CD8-positive, alpha-beta memory T cell (primary cell): ENCODE measurements at regions of chr1 and their contacts with region 1.

Region 1: DNA sequence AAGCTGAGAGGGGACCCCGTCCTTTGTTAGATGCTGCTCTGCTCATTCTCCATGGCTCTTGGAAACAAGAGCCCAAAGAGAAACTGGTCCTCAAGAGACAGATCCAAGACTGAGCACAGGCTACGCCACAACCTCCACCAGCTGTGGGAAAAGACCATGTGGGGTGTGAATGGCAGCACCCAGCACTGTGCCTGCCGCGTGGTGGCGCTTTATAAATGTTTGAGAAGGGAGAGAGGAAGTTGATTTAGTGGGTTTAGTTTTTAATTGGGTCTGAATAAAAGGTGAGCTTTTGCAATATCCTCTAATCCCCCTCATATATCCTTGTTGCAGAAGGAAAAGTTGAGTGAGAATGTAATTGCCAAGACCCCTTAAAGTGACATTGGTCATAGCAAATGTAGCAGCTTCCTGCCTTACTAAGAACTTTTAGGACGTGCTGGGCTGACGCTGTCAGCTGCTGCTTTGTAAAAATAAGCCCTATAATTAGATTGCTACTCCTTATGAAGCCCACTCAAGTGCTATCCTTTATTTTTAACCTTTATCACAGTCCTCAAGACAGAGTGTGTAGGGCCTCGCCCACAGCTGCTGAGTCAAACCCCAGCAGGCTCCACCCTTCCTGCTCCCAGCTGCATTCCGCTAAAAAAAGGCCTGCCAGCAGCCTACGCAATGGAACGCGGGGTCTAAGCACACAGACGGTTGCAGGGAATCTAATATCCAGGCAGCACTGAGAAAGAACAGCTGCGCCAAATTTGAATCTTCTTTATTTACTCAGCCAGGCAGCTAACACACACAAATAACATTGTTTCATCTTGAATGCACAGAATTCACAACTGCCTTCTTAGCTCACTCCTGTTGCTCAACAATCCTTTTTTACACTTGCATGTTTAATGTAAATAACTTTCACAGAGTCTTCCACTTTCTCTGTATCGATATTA is 47.4 kb upstream of the PRDX6 start:
- DNase-seq: peak; percentile 38 to 72 (median 50)
- H3K4me3 ChIP-seq: no peak overlapping the region
- H3K4me3 Mint-ChIP-seq: peak overlapping the region in 6 of 7 donors; percentile 37 to 65 (median 48)
- H3K27ac ChIP-seq: peak overlapping the region; percentile 34
- H3K27ac Mint-ChIP-seq: peak overlapping the region; percentile 49 to 89 (median 63)
- H3K4me1 ChIP-seq: peaks cover 17% of the 10 kb centered on the region
- H3K4me1 Mint-ChIP-seq: peaks cover 16 to 35% (median 32%) of the 10 kb centered on the region in 3 donors
- H3K27me3 ChIP-seq: no peaks in the 10 kb centered on the region
- H3K27me3 Mint-ChIP-seq: no peaks in the 10 kb centered on the region

Region 2: DNA sequence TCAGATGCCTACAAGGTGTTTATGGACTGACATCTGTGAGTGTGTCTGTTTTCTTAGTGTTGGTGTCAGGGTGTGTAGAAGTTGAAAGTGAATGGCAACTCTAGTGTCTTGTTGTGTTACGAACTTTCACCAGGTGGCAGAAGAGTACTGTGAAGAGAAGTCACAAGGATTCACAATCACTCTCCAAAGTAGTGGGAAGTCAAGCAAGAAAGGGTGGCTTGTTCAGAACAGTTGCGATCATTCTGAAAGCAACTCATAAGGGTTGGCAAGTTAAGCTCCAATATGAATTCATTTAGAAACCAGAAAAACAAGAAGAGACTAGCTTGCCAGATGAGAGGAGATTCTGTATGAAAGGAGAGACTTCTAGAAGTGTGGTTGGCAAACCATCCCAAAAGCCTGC is 684.7 kb before region 1 on chr1:
- CTCF ChIA-PET with region 1: interaction called, 25 read pairs
- POLR2A ChIA-PET with region 1: no interaction called
- DNase-seq: peak in 2 of 5 donors; percentile 44 to 52
- H3K4me3 ChIP-seq: no peak overlapping the region
- H3K4me3 Mint-ChIP-seq: peak overlapping the region in 3 of 7 donors; percentile 19 to 49 (median 33)
- H3K27ac ChIP-seq: no peak overlapping the region
- H3K27ac Mint-ChIP-seq: peak overlapping the region in 3 of 8 donors; percentile 3 to 65 (median 6)
- H3K4me1 ChIP-seq: peaks cover 24% of the 10 kb centered on the region
- H3K4me1 Mint-ChIP-seq: peaks cover 31 to 39% (median 36%) of the 10 kb centered on the region in 3 donors
- H3K27me3 ChIP-seq: no peaks in the 10 kb centered on the region
- H3K27me3 Mint-ChIP-seq: peaks cover 4 to 6% of the 10 kb centered on the region in 2 donors

Region 3: DNA sequence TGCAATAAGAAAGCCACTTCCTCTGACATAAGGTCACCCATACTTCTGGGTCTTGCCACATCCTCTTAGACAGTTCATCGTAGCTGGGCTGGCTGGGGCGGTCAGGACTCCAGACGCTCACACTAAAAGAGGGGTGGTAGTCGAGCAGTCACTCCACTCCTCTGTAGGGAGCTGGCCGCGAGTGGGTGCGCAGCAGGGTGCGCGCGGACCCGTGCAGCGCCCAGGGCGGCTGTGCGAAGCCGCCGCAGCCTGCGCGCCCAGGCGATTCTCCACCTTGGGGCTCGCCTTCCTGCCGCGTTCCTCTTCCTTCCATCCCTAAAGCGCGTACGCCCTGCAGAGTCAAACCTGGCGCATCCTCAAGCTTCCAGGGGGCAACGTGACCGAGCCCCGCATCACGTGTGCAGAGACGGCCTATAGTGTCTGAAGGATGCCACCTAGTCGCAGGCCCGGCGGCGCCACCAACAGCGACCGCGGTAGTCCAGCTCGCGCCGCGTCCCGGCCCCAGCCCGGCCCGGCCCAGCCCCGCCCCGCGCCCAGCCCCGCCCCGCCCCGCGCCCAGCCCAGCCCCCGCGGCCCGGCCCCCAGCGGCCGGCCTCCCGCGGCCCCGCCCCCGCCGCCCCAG is 47.0 kb after region 1 on chr1:
- CTCF ChIA-PET with region 1: interaction called, 30 read pairs
- POLR2A ChIA-PET with region 1: interaction called, 4 read pairs
- DNase-seq: peak; percentile 78 to 89 (median 80)
- H3K4me3 ChIP-seq: peak overlapping the region; percentile 93
- H3K4me3 Mint-ChIP-seq: peak overlapping the region; percentile 88 to 97 (median 93)
- H3K27ac ChIP-seq: peak overlapping the region; percentile 93
- H3K27ac Mint-ChIP-seq: peak overlapping the region; percentile 92 to 97 (median 94)
- H3K4me1 ChIP-seq: peaks cover 40% of the 10 kb centered on the region
- H3K4me1 Mint-ChIP-seq: peaks cover 58 to 79% (median 76%) of the 10 kb centered on the region in 3 donors
- H3K27me3 ChIP-seq: no peaks in the 10 kb centered on the region
- H3K27me3 Mint-ChIP-seq: no peaks in the 10 kb centered on the region

Region 4: GRCh38 chr1:173570370-173571007 is 140.8 kb after region 1 on chr1:
- CTCF ChIA-PET with region 1: no interaction called
- POLR2A ChIA-PET with region 1: no interaction called
- DNase-seq: no peak
- H3K4me3 ChIP-seq: no peak overlapping the region
- H3K4me3 Mint-ChIP-seq: peak overlapping the region in 1 of 7 donors; percentile 32
- H3K27ac ChIP-seq: no peak overlapping the region
- H3K27ac Mint-ChIP-seq: no peak overlapping the region
- H3K4me1 ChIP-seq: no peaks in the 10 kb centered on the region
- H3K4me1 Mint-ChIP-seq: peaks cover 0 to 10% (median 3%) of the 10 kb centered on the region in 3 donors
- H3K27me3 ChIP-seq: no peaks in the 10 kb centered on the region
- H3K27me3 Mint-ChIP-seq: peaks cover 5 to 9% of the 10 kb centered on the region in 2 donors

Region 5: DNA sequence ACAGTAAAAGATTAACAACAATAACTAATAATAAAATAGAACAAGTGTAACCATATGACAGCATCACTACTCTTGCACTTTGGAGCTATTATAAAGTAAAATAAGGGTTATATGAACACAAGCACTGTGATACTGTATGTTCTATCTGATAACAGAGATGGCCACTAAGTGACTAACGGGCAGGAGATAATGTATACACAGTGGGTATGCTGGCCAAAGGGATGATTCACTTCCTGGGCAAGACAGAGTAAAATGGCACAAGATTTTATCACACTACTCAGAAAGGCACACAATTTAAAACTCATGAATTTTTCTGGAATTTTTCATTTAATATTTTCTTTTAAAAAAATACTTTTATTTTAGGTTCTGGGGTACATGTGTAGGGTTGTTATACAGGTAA is 160.8 kb after region 1 on chr1:
- CTCF ChIA-PET with region 1: no interaction called
- POLR2A ChIA-PET with region 1: interaction called, 10 read pairs
- DNase-seq: no peak
- H3K4me3 ChIP-seq: no peak overlapping the region
- H3K4me3 Mint-ChIP-seq: no peak overlapping the region
- H3K27ac ChIP-seq: no peak overlapping the region
- H3K27ac Mint-ChIP-seq: no peak overlapping the region
- H3K4me1 ChIP-seq: no peaks in the 10 kb centered on the region
- H3K4me1 Mint-ChIP-seq: peaks cover 0 to 11% (median 9%) of the 10 kb centered on the region in 3 donors
- H3K27me3 ChIP-seq: no peaks in the 10 kb centered on the region
- H3K27me3 Mint-ChIP-seq: peaks cover 2 to 10% of the 10 kb centered on the region in 2 donors

Region 6: DNA sequence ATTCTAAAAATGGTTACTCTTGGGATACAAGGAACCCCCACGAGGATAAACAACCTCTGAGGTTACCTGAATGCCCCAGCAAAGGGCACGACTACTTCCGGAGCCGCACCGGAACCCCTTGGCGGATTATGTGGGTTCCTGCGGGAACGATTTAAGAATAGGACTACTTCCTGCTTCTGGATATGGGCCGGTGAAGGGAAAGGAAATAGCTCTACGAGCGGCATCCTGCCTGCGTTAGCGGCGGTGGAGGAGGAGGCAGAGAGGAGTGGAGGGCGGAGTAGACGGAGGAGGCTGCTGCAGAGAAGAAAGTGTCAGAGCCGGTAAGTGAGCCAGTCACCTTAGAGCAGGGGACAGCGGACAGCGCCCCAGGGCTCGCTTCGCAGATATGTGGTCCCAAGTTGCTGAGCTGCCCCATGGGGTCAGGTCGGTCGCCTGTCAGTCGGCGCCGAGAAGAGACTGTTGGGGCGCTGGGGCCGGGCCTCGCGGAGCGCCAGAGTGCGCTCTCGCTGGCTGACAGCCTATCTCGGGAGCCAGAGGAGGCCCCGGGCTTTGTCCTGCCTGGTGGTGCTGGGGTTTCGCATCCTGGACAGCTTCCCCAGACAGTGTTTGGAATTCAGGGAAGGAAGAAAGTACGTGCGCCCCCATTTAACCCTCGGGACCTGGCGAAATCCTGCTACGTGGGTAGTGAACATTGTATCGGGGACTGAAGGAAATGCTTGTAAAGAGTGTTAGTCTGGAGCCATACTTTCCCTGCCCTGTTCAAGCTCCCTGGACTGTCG is 285.2 kb after region 1 on chr1 and contains the start of gene KLHL20:
- CTCF ChIA-PET with region 1: interaction called, 14 read pairs
- POLR2A ChIA-PET with region 1: interaction called, 3 read pairs
- DNase-seq: peak; percentile 74 to 89 (median 89)
- H3K4me3 ChIP-seq: peak within 1 kb of the TSS; percentile 77
- H3K4me3 Mint-ChIP-seq: peak within 1 kb of the TSS; percentile 88 to 99 (median 93)
- H3K27ac ChIP-seq: peak within 1 kb of the TSS; percentile 87
- H3K27ac Mint-ChIP-seq: peak within 1 kb of the TSS; percentile 71 to 99 (median 95)
- H3K4me1 ChIP-seq: peaks cover 26% of the 10 kb centered on the region
- H3K4me1 Mint-ChIP-seq: peaks cover 32 to 44% (median 34%) of the 10 kb centered on the region in 3 donors
- H3K27me3 ChIP-seq: peaks cover 6% of the 10 kb centered on the region
- H3K27me3 Mint-ChIP-seq: peaks cover 12 to 18% of the 10 kb centered on the region in 2 donors
- total RNA-seq, gene KLHL20: 19.7 to 20.5 TPM

Region 7: DNA sequence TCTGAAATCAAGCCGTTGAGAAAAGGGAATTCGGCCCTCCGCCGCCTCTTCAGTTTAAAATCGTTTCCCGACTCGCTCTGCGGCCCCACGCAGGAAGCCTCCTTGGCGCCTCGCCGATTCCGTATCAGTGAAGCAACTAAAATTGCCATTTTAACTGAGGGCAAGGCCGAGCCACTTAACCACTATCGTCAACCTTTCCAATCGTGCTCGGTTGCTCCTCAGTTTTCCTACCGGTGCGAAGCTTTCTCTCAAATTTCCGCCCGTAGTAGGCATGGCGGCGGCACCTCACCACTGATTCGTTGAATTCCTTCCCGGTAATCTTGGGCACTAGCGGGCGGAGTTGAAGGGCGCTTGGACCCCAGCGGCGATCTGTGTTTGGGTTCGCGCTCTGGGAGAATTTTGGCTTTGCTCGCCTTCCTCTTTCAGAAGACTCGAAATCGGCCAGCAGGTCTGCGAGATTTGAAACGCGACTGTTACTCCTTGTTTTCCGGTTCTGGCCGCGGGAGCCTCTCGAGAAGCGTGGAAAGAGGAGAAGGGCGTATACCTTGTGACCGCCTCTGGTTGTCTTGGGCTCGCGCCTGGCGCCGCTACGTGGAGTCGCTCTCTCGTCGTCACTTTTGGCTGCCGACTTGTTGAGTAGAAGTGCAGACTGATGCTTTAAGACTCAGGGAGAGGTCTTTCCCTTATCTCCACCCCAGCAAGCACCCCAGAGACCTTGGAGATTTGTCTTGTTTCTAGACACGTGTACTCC is 394.8 kb after region 1 on chr1 and contains the starts of genes CENPL and DARS2:
- CTCF ChIA-PET with region 1: interaction called, 23 read pairs
- POLR2A ChIA-PET with region 1: interaction called, 4 read pairs
- DNase-seq: peak; percentile 79 to 93 (median 91)
- H3K4me3 ChIP-seq: peak within 1 kb of the TSS; percentile 95
- H3K4me3 Mint-ChIP-seq: peak within 1 kb of the TSS; percentile 89 to 99 (median 92)
- H3K27ac ChIP-seq: peak within 1 kb of the TSS; percentile 93
- H3K27ac Mint-ChIP-seq: peak within 1 kb of the TSS; percentile 89 to 99 (median 94)
- H3K4me1 ChIP-seq: peaks cover 18% of the 10 kb centered on the region
- H3K4me1 Mint-ChIP-seq: peaks cover 38 to 71% (median 57%) of the 10 kb centered on the region in 3 donors
- H3K27me3 ChIP-seq: no peaks in the 10 kb centered on the region
- H3K27me3 Mint-ChIP-seq: no peaks in the 10 kb centered on the region
- total RNA-seq, gene CENPL: 24.9 to 27.4 TPM
- total RNA-seq, gene DARS2: 39.4 to 42.5 TPM